ENCODE measurements at regions of chr20 and their contacts with region 1.

Region 1: DNA sequence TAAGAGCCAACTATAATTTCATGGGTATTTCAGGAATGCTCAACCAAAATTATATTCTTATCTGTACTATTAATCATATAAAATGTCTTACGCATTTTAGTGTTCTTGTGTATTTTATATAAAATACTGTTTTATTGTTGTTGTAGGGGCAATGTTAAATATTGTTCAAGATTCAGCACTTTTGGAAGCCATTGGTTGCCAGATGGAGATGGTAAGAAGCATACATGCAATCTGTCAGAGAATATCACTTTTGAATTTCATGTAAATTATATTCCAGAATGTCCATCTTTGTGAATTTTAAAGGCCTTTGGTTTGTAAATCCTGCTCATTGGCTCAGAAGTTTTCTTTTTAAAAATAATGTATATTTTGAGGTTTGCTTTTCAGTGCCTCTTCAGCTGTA is 50.0 kb upstream of the ADIG start:
- DNase-seq: no peak
- ATAC-seq: no peak
- H3K4me3 Mint-ChIP-seq: no peak overlapping the region
- H3K27ac Mint-ChIP-seq: no peak overlapping the region
- H3K4me1 Mint-ChIP-seq: peaks cover 3% of the 10 kb centered on the region
- H3K27me3 Mint-ChIP-seq: no peaks in the 10 kb centered on the region

Region 2: GRCh38 chr20:38466171-38466570 is 64.8 kb before region 1 on chr20:
- CTCF ChIA-PET with region 1: no interaction called
- POLR2A ChIA-PET with region 1: no interaction called
- intact Hi-C with region 1: no loop called
- DNase-seq: no peak
- ATAC-seq: no peak
- H3K4me3 Mint-ChIP-seq: no peak overlapping the region
- H3K27ac Mint-ChIP-seq: no peak overlapping the region
- H3K4me1 Mint-ChIP-seq: no peaks in the 10 kb centered on the region
- H3K27me3 Mint-ChIP-seq: no peaks in the 10 kb centered on the region

Region 3: DNA sequence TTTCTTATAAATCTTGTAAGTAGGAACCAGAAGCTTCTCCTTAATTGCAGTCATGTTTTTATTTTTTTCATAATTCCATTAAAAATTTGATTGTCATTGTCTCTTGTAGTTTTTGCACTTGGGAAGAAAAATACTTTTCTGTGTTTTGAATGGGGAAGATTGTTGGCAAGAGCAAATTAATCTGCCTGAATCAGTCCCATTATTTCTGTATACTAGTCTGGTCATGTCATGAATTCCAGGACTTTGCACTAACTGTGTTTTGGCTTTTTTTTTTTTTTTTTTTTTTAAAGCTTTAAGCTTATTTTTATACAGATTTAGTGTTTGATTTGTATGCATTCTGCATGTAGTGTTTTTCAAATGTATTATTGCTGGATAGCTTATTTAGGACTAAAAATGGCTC is 10.8 kb before region 1 on chr20:
- CTCF ChIA-PET with region 1: interaction called, 10 read pairs
- POLR2A ChIA-PET with region 1: interaction called, 4 read pairs
- intact Hi-C with region 1: no loop called
- DNase-seq: no peak
- ATAC-seq: no peak
- H3K4me3 Mint-ChIP-seq: no peak overlapping the region
- H3K27ac Mint-ChIP-seq: no peak overlapping the region
- H3K4me1 Mint-ChIP-seq: peaks cover 4% of the 10 kb centered on the region
- H3K27me3 Mint-ChIP-seq: no peaks in the 10 kb centered on the region

Region 4: DNA sequence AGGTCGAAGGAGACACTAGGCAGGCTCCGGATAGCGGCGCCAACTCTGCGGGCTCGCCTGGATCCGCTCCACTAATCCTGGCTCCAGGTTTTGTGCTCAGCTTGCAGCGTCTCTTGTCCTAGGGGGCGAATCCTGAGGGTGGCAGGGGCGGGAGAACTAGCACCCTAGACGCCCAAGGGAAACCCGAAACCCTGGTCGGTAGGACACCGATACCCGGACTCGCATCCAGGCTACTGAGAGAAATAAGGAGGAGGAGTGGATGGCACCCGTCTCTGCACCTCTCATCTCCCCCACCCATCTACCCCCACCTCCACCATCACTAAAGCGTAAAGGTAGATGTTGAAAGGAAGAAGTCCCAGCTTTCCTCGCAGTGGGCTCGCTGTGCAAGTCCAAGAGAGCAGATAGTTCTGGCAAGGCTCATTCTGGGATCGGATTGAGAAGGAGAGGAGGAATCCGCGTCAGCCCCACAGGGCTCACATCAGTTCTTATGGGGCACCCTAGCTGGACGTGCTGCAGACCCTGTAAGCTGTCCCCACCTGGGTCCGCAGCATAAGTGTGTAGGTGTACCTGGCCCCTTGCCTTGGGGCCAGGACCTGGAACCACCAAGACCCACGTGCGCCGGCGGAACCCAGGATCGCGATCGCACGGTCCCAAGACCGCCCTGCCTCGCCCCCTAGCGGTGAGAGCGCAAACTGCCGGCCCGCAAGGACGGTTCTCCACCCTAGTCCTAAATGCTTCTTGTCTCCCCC is 200.1 kb after region 1 on chr20:
- CTCF ChIA-PET with region 1: no interaction called
- POLR2A ChIA-PET with region 1: no interaction called
- intact Hi-C with region 1: no loop called
- DNase-seq: peak; percentile 90
- ATAC-seq: peak; percentile 81
- H3K4me3 Mint-ChIP-seq: peak overlapping the region; percentile 50
- H3K27ac Mint-ChIP-seq: no peak overlapping the region
- H3K4me1 Mint-ChIP-seq: peaks cover 39% of the 10 kb centered on the region
- H3K27me3 Mint-ChIP-seq: peaks cover 88% of the 10 kb centered on the region